Right cardiac atrium (tissue), 5 donors: ENCODE measurements at regions of chr4 and their contacts with region 1.

Region 1: GRCh38 chr4:54217642-54218495 is 11.2 kb upstream of the PDGFRA start:
- DNase-seq: peak; percentile 84 to 93 (median 87)
- ATAC-seq: peak; percentile 92 to 94
- H3K4me3 ChIP-seq: peak overlapping the region; percentile 11
- H3K27ac ChIP-seq: peak overlapping the region; percentile 49
- H3K4me1 ChIP-seq: peaks cover 2% of the 10 kb centered on the region
- H3K27me3 ChIP-seq: no peaks in the 10 kb centered on the region

Region 2: GRCh38 chr4:53908661-53909078 is 309.2 kb before region 1 on chr4:
- intact Hi-C with region 1: loop called in 2 of 4 experiments (anchors 5 to 10 kb)
- DNase-seq: peak in 1 of 3 donors; percentile 28
- ATAC-seq: peak; percentile 94 to 95
- H3K4me3 ChIP-seq: peak overlapping the region; percentile 34
- H3K27ac ChIP-seq: no peak overlapping the region
- H3K4me1 ChIP-seq: peaks cover 3% of the 10 kb centered on the region
- H3K27me3 ChIP-seq: no peaks in the 10 kb centered on the region

Region 3: DNA sequence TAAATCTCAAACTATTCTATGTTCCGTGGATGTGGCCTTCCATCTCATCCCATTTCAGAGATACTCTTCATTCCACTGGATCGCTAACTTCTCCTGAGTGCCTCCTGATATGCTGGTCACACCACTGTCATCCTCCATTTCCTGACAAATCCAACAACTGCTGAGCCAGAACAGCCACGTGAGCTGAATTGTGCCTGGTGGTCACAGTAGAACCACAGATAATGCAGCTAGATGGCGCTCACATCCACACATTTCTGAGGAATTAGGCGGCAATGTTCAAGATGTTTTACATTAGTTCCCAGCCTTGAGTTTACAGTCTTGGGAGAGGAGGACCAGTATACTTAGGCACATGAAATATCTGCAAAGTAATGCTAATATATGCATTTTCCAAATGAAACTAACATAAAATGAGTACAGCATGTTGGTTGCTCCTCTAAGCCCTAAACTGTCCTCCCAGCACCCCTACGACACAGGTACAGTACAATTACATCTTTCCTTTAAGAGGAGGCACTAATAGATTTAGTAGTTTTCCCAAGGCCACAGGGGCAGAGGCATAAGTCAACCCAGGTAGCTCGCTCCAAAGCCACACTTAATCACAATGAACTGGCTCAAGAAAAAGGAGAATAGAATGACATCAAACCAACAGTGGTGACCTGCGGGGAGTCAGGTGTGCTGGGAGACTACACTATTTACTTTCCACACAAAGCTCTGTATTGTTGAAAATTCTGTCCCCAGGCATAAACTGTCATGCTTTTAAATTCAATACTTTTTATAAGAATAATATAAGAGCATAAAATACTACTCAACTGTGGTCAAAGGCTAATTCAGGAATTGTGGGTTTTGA is 287.7 kb before region 1 on chr4:
- intact Hi-C with region 1: loop called in 2 of 4 experiments (anchors 2 to 5 kb)
- DNase-seq: peak; percentile 77 to 85 (median 78)
- ATAC-seq: peak; percentile 89 to 92
- H3K4me3 ChIP-seq: no peak overlapping the region
- H3K27ac ChIP-seq: no peak overlapping the region
- H3K4me1 ChIP-seq: no peaks in the 10 kb centered on the region
- H3K27me3 ChIP-seq: no peaks in the 10 kb centered on the region

Region 4: GRCh38 chr4:54064295-54065111 is 153.4 kb before region 1 on chr4 and contains the start of gene CHIC2:
- intact Hi-C with region 1: loop called in 1 of 4 experiments (anchors 10 kb)
- DNase-seq: peak; percentile 97 to 99 (median 98)
- ATAC-seq: peak; percentile 86 to 89
- H3K4me3 ChIP-seq: peak within 1 kb of the TSS; percentile 93
- H3K27ac ChIP-seq: peak within 1 kb of the TSS; percentile 91
- H3K4me1 ChIP-seq: peaks cover 6% of the 10 kb centered on the region
- H3K27me3 ChIP-seq: no peaks in the 10 kb centered on the region
- total RNA-seq, gene CHIC2: 11.1 to 18.1 (median 13.3) TPM

Region 5: GRCh38 chr4:54099748-54100574 is 117.9 kb before region 1 on chr4 and contains the start of gene GSX2:
- intact Hi-C with region 1: loop called in 1 of 4 experiments (anchors 10 kb)
- DNase-seq: peak; percentile 67 to 80 (median 78)
- ATAC-seq: peak; percentile 15 to 28
- H3K4me3 ChIP-seq: peak within 1 kb of the TSS; percentile 45
- H3K27ac ChIP-seq: no peak within 1 kb of the TSS
- H3K4me1 ChIP-seq: peaks cover 12% of the 10 kb centered on the region
- H3K27me3 ChIP-seq: no peaks in the 10 kb centered on the region
- total RNA-seq, gene GSX2: not detected